Body of pancreas (tissue), 4 donors: ENCODE measurements at regions of chr17 and their contacts with region 1.

Region 1: DNA sequence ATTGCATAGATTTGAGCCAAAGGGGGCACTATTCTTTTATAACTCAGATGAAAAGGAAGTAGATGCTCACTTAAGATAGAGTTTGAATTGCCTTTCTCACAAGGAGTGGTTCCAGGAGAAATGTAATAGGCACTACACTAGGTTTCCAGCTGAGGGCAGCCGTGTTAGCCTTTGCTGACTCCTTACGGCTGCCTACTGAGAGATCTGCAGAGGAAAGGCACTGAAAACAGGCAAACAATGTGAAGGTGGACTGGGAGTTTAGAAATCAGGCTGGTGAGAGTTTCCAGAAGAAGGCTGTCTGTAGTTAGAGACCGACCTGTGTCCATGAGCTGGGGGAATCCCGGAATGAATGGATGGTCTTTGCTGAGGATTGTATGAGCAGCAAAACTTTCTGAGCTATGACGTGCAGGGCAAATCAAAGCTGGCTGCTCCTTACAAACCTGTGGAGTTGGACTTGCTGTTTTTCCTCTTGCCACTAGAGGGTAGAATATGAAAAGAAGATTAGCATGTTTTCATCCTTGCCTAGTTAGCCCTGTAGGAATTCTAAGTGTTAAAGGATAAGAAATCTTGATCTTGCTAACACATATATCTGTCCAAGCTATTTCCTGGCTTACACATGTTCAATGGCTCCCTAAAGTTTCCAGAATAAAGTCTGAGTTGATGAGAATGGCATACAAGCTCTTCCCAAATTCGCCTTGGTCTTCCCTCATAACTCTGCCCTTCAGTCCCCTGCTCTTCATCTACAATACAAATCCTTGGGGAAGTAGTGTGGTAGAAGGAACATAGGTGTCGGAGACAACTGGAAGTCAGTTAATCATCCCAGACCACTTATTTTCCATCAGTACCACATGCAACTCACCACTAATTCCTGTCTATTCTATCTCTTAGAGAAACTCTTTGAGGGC is 20.1 kb upstream of the TAOK1 start:
- DNase-seq: peak; percentile 31 to 63 (median 62)
- ATAC-seq: peak; percentile 95
- H3K4me3 ChIP-seq: no peak overlapping the region
- H3K27ac ChIP-seq: peak overlapping the region in 1 of 4 donors; percentile 15
- H3K4me1 ChIP-seq: no peaks in the 10 kb centered on the region
- H3K27me3 ChIP-seq: no peaks in the 10 kb centered on the region
- CTCF ChIP-seq: peak; percentile 60 to 86 (median 81)
- POLR2A ChIP-seq: no peak

Region 2: DNA sequence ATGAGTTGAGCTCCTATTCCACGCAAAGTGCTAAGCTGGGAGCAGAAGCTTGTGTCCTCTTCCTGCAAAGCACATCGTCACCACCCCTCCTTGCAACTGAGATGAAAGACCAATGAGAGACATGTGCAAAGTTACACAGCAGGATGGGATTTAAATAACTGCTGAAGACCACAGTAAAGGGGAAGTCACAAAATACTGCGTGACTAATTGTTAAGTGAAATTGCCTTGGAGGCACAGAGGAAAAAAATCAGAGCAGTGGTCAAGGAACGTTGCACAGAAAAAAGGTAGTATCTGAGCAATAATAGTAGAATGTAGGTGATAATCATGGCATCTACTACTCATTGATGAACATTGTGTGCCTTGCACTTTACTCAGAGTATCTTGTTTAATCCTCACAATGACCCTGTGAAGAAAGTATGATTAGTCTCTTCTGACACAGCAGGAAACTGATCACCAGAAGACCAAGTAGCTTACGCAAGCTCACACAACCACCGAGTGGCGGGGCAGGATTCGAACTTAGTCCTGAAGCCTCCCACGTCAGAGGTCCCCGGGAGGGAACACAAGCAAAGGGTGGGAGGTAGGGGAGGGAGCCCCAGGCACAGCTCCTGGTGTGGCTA is 174.5 kb before region 1 on chr17:
- intact Hi-C with region 1: no loop called
- DNase-seq: peak in 2 of 4 donors; percentile 8 to 45
- ATAC-seq: no peak
- H3K4me3 ChIP-seq: no peak overlapping the region
- H3K27ac ChIP-seq: peak overlapping the region in 1 of 4 donors; percentile 45
- H3K4me1 ChIP-seq: no peaks in the 10 kb centered on the region
- H3K27me3 ChIP-seq: no peaks in the 10 kb centered on the region
- CTCF ChIP-seq: no peak
- POLR2A ChIP-seq: no peak

Region 3: DNA sequence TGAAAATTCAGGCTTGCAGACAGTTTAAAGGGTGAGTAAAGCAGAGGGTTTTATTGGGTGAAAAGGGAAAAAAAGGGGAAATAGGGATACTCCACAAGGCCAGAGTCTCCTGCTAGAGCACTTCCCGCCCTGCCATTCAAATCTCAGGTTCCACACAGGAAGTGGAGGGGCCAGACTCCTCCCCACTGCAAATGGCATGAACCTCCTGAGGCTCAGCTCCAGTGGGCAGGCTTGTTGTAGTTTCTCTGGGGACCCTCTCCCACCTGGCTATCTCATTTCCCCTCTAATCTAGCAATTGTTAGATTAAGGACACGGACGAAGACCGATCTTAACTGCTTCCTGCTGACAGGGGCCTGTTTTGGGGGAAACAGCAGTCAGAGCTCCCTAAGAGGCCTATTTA is 63.5 kb after region 1 on chr17:
- intact Hi-C with region 1: no loop called
- DNase-seq: no peak
- ATAC-seq: no peak
- H3K4me3 ChIP-seq: no peak overlapping the region
- H3K27ac ChIP-seq: no peak overlapping the region
- H3K4me1 ChIP-seq: peaks cover 9% of the 10 kb centered on the region
- H3K27me3 ChIP-seq: no peaks in the 10 kb centered on the region
- CTCF ChIP-seq: no peak
- POLR2A ChIP-seq: no peak

Region 4: DNA sequence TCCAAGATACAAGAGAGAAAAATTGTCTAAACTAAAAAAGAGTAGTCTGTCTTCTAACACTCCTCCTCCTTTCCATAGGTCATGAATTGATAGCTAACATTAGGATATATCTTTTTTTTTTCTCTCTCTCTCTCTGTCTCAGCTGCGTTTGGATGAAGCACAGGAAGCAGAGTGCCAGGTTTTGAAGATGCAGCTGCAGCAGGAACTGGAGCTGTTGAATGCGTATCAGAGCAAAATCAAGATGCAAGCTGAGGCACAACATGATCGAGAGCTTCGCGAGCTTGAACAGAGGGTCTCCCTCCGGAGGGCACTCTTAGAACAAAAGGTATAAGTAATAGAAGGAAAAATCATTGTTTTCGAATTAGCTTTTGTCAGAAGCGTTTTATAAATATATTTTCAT is 163.9 kb after region 1 on chr17:
- intact Hi-C with region 1: loop called (anchors 10 kb)
- DNase-seq: no peak
- ATAC-seq: no peak
- H3K4me3 ChIP-seq: no peak overlapping the region
- H3K27ac ChIP-seq: no peak overlapping the region
- H3K4me1 ChIP-seq: no peaks in the 10 kb centered on the region
- H3K27me3 ChIP-seq: no peaks in the 10 kb centered on the region
- CTCF ChIP-seq: no peak
- POLR2A ChIP-seq: no peak